ENCODE measurements at regions of chr2 and their contacts with region 1.

Region 1: GRCh38 chr2:27663463-27664249 is at the starts of genes SLC4A1AP and SUPT7L:
- DNase-seq: peak; percentile 76
- ATAC-seq: peak; percentile 74
- H3K4me3 ChIP-seq: peak within 1 kb of the TSS; percentile 95
- H3K27ac ChIP-seq: peak within 1 kb of the TSS; percentile 71
- H3K4me1 ChIP-seq: peaks cover 36% of the 10 kb centered on the region
- H3K27me3 ChIP-seq: no peaks in the 10 kb centered on the region
- CTCF ChIP-seq: no peak
- total RNA-seq, gene SLC4A1AP: 29.1 and 30.3 TPM in 2 replicates
- total RNA-seq, gene SUPT7L: 23.4 and 27.2 TPM in 2 replicates

Region 2: DNA sequence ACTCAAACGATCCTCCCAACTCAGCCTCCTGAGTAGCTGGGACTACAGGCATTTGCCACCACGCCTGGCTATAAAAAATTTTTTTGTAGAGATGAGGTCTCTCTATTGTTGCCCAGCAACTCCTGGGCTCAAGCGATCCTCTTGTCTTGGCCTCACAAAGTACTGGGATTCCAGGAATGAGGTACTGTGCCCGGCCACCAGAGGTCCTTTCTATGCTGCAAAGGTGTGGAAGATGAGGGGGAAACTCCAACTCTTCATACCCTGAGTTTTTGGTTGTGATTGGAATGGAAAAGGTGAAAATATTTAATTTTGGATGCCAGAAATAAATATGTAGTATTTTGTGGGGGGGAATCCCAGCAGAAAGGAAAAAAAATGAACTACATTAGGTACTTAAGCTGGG is 143.8 kb after region 1 on chr2:
- CTCF ChIA-PET with region 1: no interaction called
- POLR2A ChIA-PET with region 1: interaction called, 11 read pairs
- intact Hi-C with region 1: no loop called
- DNase-seq: peak; percentile 57
- ATAC-seq: peak; percentile 25; the same call in 1 of the 2 replicates
- H3K4me3 ChIP-seq: no peak overlapping the region
- H3K27ac ChIP-seq: no peak overlapping the region
- H3K4me1 ChIP-seq: peaks cover 28% of the 10 kb centered on the region
- H3K27me3 ChIP-seq: no peaks in the 10 kb centered on the region
- CTCF ChIP-seq: peak; percentile 79

Measured in PC-3 (cell line).